CD4-positive, alpha-beta memory T cell (primary cell): ENCODE measurements at regions of chr1 and their contacts with region 1.

Region 1: DNA sequence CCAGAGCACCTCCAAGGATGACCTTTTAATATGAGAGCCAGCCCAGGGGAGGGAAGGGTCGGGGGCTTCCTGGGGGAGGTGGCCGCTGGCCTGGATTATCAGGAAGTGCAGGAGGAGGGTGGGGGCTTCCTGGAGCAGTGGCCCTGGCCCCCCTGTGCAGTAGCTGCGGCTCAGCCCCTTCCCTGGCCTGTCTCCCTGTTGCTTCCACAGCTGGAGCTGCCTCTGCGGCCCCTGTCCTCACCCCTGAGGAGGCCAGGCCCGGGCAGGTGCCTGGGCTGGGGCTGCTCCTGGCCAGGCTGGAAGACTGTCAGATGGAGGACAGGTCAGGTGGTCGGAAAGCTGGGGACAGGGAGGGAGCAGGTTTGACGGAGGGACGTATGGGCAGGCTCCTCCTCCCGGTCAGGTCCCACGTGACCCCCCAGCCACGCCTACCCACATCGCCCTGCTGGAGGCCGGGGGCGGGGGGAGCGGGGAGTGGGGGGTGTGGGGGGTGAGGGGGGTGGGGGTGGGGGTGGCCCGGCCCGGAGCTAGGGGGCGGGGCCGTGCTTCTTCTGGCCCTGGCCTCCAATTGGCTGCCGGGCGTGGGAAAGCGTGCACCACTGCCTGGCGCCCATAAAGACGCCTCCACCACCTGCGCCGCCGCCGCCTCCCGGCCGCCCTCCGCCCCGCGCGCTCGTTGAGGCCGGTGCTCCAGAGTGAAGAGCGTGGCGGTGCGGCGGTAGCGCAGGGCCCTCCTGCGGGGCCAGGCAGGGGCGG is 10.2 kb upstream of the TNFRSF14 start:
- DNase-seq: peak; percentile 89 to 92 (median 90)
- H3K4me3 ChIP-seq: peak overlapping the region; percentile 78 to 80
- H3K4me3 Mint-ChIP-seq: peak overlapping the region; percentile 43 to 97 (median 92)
- H3K27ac ChIP-seq: peak overlapping the region; percentile 98
- H3K27ac Mint-ChIP-seq: peak overlapping the region in 6 of 7 donors; percentile 9 to 99 (median 97)
- H3K4me1 ChIP-seq: peaks cover 48% of the 10 kb centered on the region
- H3K4me1 Mint-ChIP-seq: peaks cover 8 to 39% (median 20%) of the 10 kb centered on the region in 4 donors
- H3K27me3 ChIP-seq: no peaks in the 10 kb centered on the region
- H3K27me3 Mint-ChIP-seq: peaks cover 0 to 1% of the 10 kb centered on the region in 2 donors

Region 2: GRCh38 chr1:2133039-2133878 is 412.7 kb before region 1 on chr1:
- CTCF ChIA-PET with region 1: no interaction called
- POLR2A ChIA-PET with region 1: interaction called, 4 read pairs
- intact Hi-C with region 1: loop called (anchors 1 kb)
- DNase-seq: peak; percentile 97 to 98 (median 98)
- H3K4me3 ChIP-seq: peak overlapping the region; percentile 61 to 77
- H3K4me3 Mint-ChIP-seq: peak overlapping the region; percentile 82 to 92 (median 85)
- H3K27ac ChIP-seq: peak overlapping the region; percentile 64
- H3K27ac Mint-ChIP-seq: peak overlapping the region; percentile 81 to 98 (median 97)
- H3K4me1 ChIP-seq: peaks cover 11% of the 10 kb centered on the region
- H3K4me1 Mint-ChIP-seq: peaks cover 10 to 47% (median 28%) of the 10 kb centered on the region in 4 donors
- H3K27me3 ChIP-seq: no peaks in the 10 kb centered on the region
- H3K27me3 Mint-ChIP-seq: no peaks in the 10 kb centered on the region

Region 3: DNA sequence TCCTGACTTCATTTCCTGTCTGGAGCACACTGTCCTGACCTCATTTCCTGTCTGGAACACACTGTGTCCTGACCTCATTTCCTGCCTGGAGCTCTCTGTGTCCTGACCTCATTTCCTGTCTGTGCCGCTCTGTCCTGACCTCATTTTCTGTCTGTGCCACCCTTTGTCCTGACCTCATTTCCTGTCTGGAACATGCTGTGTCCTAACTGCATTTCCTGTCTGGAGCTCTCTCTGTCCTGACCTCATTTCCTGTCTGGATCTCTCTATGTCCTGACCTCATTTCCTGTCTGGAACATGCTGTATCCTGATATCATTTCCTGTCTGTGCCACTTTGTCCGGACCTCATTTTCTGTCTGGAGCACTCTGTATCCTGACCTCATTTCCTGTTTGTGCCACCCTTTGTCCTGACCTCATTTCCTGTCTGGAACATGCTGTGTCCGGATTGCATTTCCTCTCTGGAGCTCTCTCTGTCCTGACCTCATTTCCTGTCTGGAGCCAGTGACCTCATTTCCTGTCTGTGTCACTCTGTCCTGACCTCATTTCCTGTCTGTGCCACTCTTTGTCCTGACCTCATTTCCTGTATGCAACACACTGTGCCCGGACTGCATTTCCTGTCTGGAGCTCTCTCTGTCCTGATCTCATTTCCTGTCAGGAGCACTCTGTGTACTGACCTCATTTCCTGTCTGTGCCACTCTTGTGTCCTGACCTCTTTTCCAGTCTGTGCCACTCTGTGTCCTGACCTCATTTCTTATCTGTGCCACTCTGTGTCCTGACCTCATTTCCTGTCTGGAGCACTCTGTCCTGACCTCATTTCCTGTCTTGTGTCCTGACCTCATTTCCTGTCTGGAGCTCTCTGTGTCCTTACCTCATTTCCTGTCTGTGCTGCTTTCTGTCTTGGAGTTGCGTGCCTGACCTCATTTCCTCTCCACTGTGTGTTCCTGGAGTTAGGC is 290.2 kb before region 1 on chr1:
- CTCF ChIA-PET with region 1: no interaction called
- POLR2A ChIA-PET with region 1: interaction called, 14 read pairs
- intact Hi-C with region 1: no loop called
- DNase-seq: peak; percentile 87 to 96 (median 92)
- H3K4me3 ChIP-seq: no peak overlapping the region
- H3K4me3 Mint-ChIP-seq: no peak overlapping the region
- H3K27ac ChIP-seq: peak overlapping the region; percentile 95
- H3K27ac Mint-ChIP-seq: no peak overlapping the region
- H3K4me1 ChIP-seq: peaks cover 87% of the 10 kb centered on the region
- H3K4me1 Mint-ChIP-seq: peaks cover 31 to 59% (median 40%) of the 10 kb centered on the region in 4 donors
- H3K27me3 ChIP-seq: no peaks in the 10 kb centered on the region
- H3K27me3 Mint-ChIP-seq: no peaks in the 10 kb centered on the region

Region 4: GRCh38 chr1:2412519-2413233 is 133.3 kb before region 1 on chr1 and contains the start of gene PEX10:
- CTCF ChIA-PET with region 1: interaction called, 85 read pairs
- POLR2A ChIA-PET with region 1: interaction called, 112 read pairs
- intact Hi-C with region 1: loop called (anchors 1 kb)
- DNase-seq: peak; percentile 96 to 98 (median 97)
- H3K4me3 ChIP-seq: peak within 1 kb of the TSS; percentile 47 to 70
- H3K4me3 Mint-ChIP-seq: peak within 1 kb of the TSS; percentile 82 to 94 (median 87)
- H3K27ac ChIP-seq: peak within 1 kb of the TSS; percentile 84
- H3K27ac Mint-ChIP-seq: peak within 1 kb of the TSS; percentile 75 to 99 (median 92)
- H3K4me1 ChIP-seq: peaks cover 55% of the 10 kb centered on the region
- H3K4me1 Mint-ChIP-seq: peaks cover 17 to 51% (median 32%) of the 10 kb centered on the region in 4 donors
- H3K27me3 ChIP-seq: no peaks in the 10 kb centered on the region
- H3K27me3 Mint-ChIP-seq: no peaks in the 10 kb centered on the region
- total RNA-seq, gene PEX10: 11.7 to 13.0 TPM

Region 5: DNA sequence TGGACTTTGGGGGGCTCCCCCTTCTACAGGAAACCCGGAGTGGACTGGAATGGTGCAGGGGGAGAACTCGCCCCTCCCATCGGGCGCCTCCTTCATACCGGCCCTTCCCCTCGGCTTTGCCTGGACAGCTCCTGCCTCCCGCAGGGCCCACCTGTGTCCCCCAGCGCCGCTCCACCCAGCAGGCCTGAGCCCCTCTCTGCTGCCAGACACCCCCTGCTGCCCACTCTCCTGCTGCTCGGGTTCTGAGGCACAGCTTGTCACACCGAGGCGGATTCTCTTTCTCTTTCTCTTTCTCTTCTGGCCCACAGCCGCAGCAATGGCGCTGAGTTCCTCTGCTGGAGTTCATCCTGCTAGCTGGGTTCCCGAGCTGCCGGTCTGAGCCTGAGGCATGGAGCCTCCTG is 10.3 kb after region 1 on chr1 and contains the start of gene TNFRSF14:
- CTCF ChIA-PET with region 1: interaction called, 18 read pairs
- POLR2A ChIA-PET with region 1: interaction called, 108 read pairs
- intact Hi-C with region 1: loop called (anchors 1 kb)
- DNase-seq: peak; percentile 77 to 88 (median 78)
- H3K4me3 ChIP-seq: peak within 1 kb of the TSS; percentile 95 to 98
- H3K4me3 Mint-ChIP-seq: peak within 1 kb of the TSS; percentile 92 to 99 (median 96)
- H3K27ac ChIP-seq: peak within 1 kb of the TSS; percentile 98
- H3K27ac Mint-ChIP-seq: peak within 1 kb of the TSS; percentile 95 to 100 (median 98)
- H3K4me1 ChIP-seq: peaks cover 43% of the 10 kb centered on the region
- H3K4me1 Mint-ChIP-seq: peaks cover 9 to 50% (median 30%) of the 10 kb centered on the region in 4 donors
- H3K27me3 ChIP-seq: no peaks in the 10 kb centered on the region
- H3K27me3 Mint-ChIP-seq: no peaks in the 10 kb centered on the region
- total RNA-seq, gene TNFRSF14: 170 to 173 TPM

Region 6: DNA sequence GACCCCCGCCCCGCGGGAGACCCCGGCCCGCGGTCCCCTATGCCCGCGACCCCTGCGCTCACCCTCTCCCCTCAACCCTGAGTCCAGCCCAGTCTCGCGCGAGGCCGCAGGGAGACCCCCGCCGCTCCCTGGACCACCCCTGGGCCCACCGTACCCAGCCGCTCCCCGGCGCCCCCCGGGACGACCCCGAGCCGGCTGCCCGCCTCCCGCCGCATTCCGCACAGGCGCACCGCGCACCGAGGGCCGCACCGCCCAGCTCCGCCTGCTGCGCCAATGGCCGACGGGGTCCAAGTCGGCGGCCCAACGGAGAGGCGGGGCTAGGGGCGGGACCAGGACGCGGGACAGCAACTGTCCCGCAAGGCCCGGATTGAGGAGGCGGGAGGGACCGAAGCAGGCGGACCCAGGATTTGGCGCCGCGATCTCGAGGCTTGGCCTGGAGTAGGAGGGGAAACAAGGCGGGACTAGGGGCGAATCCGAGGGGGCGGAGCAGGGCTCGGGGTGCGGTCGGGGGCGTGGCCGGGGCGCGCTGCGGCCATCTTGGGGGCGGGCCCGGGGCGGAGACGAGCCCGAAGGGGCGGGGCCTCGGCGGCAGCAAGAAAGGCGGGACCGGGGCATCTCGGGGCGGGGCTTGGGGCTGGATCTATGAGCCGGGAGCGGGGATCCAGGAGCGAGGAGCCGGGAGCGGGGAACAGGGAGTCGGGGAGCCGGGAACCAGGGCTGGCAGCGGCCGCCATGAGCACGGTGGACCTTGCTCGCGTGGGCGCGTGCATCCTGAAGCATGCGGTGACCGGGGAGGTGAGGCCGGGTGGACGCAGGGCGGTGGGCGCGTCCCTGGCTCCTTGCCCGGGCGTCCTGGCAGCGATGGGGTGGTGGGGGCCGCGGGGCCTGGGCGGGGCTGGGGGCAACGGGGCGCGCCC is 40.5 kb after region 1 on chr1 and contains the start of gene PRXL2B:
- CTCF ChIA-PET with region 1: interaction called, 34 read pairs
- POLR2A ChIA-PET with region 1: interaction called, 189 read pairs
- intact Hi-C with region 1: loop called (anchors 1 kb)
- DNase-seq: peak; percentile 95 to 98 (median 95)
- H3K4me3 ChIP-seq: peak within 1 kb of the TSS; percentile 52 to 72
- H3K4me3 Mint-ChIP-seq: peak within 1 kb of the TSS; percentile 87 to 98 (median 92)
- H3K27ac ChIP-seq: peak within 1 kb of the TSS; percentile 90
- H3K27ac Mint-ChIP-seq: peak within 1 kb of the TSS; percentile 95 to 99 (median 97)
- H3K4me1 ChIP-seq: peaks cover 42% of the 10 kb centered on the region
- H3K4me1 Mint-ChIP-seq: peaks cover 22 to 56% (median 36%) of the 10 kb centered on the region in 4 donors
- H3K27me3 ChIP-seq: no peaks in the 10 kb centered on the region
- H3K27me3 Mint-ChIP-seq: no peaks in the 10 kb centered on the region
- total RNA-seq, gene PRXL2B: 26.5 to 27.2 TPM